Activated naive CD4-positive, alpha-beta T cell treated with anti-CD3 and anti-CD28 coated beads, Interleukin-2, amount 10 ng/mL, durations not matched to agents 7 days and 5 days (primary cell): ENCODE measurements at regions of chrX and their contacts with region 1.

Region 1: DNA sequence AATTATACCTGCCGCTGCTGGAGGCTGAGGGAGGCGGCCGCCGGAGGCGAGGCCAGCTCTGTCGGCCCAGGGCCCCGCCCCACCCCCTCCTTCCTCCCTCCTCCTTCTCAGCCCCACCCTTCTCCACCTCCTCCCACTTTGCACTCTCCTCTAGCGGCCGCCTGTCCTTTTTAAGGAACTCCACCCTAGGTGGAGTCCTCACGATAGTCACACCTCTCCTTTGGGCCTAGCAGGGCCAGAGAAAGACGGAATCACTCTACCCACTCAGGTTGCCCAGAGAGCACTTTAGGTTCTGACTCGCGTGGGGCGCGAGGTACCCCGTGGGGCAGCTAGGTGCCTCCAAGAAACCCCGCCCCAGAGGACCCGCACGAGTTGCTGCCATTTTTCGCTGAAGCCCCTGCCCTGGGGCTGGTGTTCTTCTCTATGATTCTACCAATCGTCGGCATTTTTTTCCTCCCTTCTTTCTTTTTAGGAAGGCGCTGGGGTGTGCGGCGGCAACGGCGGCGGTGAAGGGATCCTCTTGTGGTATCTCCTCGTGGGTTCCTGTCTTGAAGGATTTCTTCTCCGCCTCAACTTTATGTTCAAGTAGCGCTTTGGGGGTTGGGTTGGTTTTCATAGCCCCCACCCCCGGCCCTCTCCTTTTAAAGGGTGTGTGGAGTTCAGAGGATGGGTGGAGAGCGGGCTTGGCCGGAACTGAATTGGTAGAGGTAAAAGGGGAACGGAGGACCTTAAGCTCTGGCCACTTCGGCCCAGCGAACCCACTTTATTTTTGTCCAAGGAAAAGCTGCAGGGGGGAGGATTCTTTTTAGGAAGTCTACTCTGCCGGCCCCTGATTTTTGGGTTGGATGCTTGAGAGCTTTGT is at the start of gene KLF8:
- DNase-seq: peak; percentile 61
- H3K4me3 Mint-ChIP-seq: peak within 1 kb of the TSS; percentile 78
- H3K27ac Mint-ChIP-seq: peak within 1 kb of the TSS; percentile 74
- H3K4me1 Mint-ChIP-seq: peaks cover 52% of the 10 kb centered on the region
- H3K27me3 Mint-ChIP-seq: peaks cover 29% of the 10 kb centered on the region

Region 2: DNA sequence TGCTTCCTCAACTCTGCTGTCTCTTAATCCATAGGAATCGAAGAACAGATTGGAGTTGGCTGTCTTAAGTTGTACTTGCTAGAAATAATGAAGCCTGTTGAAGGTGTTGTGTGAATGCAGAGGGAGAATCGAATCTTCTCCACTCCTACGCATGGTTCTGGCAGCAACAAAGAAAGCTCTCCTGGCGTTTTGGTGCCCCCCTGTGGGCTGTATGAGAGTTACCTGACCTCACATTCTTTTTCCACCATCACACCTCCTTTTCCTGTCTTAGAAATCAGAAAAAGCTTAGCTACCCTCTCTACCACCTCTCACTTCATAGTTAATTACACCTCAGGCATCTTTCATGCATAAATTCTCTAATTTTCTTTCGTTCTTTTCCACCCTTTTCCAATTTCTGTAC is 16.0 kb after region 1 on chrX:
- CTCF ChIA-PET with region 1: interaction called, 14 read pairs
- DNase-seq: peak; percentile 69
- H3K4me3 Mint-ChIP-seq: no peak overlapping the region
- H3K27ac Mint-ChIP-seq: no peak overlapping the region
- H3K4me1 Mint-ChIP-seq: peaks cover 10% of the 10 kb centered on the region
- H3K27me3 Mint-ChIP-seq: no peaks in the 10 kb centered on the region